GM12878 (cell line): ENCODE measurements at regions of chr20 and their contacts with region 1.

Region 1: GRCh38 chr20:45934586-45935415 is at the start of gene PCIF1:
- DNase-seq: peak; percentile 93
- ATAC-seq: peak; percentile 87
- H3K4me3 ChIP-seq: peak within 1 kb of the TSS; percentile 81
- H3K27ac ChIP-seq: peak within 1 kb of the TSS; percentile 97
- H3K4me1 ChIP-seq: peaks cover 5% of the 10 kb centered on the region; the same call in 1 of the 2 replicates
- H3K27me3 ChIP-seq: no peaks in the 10 kb centered on the region
- CTCF ChIP-seq: no peak
- EP300 ChIP-seq: no peak
- POLR2A ChIP-seq: peak; percentile 98
- RAD21 ChIP-seq: no peak
- polyA plus RNA-seq, gene PCIF1: 8.4 to 10.1 TPM

Region 2: DNA sequence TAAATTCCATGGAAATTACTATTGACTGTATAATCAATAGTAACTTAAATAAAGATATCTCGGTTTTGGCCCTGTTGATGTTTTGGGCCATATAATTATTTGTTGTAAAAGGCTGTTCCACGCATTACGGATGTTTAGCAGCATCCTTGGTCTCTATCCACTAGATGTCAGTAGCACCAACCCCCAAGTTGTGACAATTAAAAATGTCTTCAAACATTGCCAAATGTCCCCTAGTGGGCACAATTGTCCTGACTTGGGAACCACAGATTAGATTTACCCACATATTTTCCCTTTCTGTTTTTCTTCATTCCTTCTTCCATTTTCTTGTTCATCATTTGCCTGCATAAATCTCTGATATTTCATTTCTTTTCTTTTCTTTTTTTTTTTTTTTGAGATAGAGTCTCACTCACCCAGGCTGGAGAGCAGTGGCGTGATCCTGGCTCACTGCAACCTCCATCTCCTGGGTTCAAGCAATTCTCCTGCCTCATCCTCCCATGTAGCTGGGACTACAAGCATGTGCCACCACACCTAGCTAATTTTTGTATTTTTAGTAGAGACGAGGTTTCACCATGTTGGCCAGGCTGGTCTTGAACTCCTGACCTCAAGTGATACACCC is 342.1 kb before region 1 on chr20:
- CTCF ChIA-PET with region 1: no interaction called
- POLR2A ChIA-PET with region 1: no interaction called
- RAD21 ChIA-PET with region 1: no interaction called
- SMC1A ChIA-PET with region 1: no interaction called
- in situ Hi-C with region 1: no loop called
- intact Hi-C with region 1: no loop called
- DNase-seq: no peak
- ATAC-seq: peak; percentile 92
- H3K4me3 ChIP-seq: no peak overlapping the region
- H3K27ac ChIP-seq: no peak overlapping the region
- H3K4me1 ChIP-seq: no peaks in the 10 kb centered on the region
- H3K27me3 ChIP-seq: no peaks in the 10 kb centered on the region; a peak in 2 of 4 replicates
- CTCF ChIP-seq: peak; percentile 71 to 94 (median 82)
- EP300 ChIP-seq: no peak
- POLR2A ChIP-seq: no peak
- RAD21 ChIP-seq: peak; percentile 71

Region 3: GRCh38 chr20:45857114-45857881 is 77.5 kb before region 1 on chr20 and contains the starts of genes ACOT8 and ZSWIM3:
- CTCF ChIA-PET with region 1: interaction called, 3 read pairs
- POLR2A ChIA-PET with region 1: interaction called, 16 read pairs
- RAD21 ChIA-PET with region 1: no interaction called
- SMC1A ChIA-PET with region 1: interaction called, 4 read pairs
- in situ Hi-C with region 1: no loop called
- intact Hi-C with region 1: loop called (anchors 2 kb)
- DNase-seq: peak; percentile 100
- ATAC-seq: peak; percentile 98
- H3K4me3 ChIP-seq: peak within 1 kb of the TSS; percentile 97
- H3K27ac ChIP-seq: peak within 1 kb of the TSS; percentile 96
- H3K4me1 ChIP-seq: peaks cover 8% of the 10 kb centered on the region
- H3K27me3 ChIP-seq: no peaks in the 10 kb centered on the region
- CTCF ChIP-seq: no peak
- EP300 ChIP-seq: no peak; a peak in 1 of 4 replicates
- POLR2A ChIP-seq: peak; percentile 91
- RAD21 ChIP-seq: no peak
- polyA plus RNA-seq, gene ACOT8: 5.1 to 10.1 TPM
- polyA plus RNA-seq, gene ZSWIM3: 1.6 to 2.0 TPM

Region 4: DNA sequence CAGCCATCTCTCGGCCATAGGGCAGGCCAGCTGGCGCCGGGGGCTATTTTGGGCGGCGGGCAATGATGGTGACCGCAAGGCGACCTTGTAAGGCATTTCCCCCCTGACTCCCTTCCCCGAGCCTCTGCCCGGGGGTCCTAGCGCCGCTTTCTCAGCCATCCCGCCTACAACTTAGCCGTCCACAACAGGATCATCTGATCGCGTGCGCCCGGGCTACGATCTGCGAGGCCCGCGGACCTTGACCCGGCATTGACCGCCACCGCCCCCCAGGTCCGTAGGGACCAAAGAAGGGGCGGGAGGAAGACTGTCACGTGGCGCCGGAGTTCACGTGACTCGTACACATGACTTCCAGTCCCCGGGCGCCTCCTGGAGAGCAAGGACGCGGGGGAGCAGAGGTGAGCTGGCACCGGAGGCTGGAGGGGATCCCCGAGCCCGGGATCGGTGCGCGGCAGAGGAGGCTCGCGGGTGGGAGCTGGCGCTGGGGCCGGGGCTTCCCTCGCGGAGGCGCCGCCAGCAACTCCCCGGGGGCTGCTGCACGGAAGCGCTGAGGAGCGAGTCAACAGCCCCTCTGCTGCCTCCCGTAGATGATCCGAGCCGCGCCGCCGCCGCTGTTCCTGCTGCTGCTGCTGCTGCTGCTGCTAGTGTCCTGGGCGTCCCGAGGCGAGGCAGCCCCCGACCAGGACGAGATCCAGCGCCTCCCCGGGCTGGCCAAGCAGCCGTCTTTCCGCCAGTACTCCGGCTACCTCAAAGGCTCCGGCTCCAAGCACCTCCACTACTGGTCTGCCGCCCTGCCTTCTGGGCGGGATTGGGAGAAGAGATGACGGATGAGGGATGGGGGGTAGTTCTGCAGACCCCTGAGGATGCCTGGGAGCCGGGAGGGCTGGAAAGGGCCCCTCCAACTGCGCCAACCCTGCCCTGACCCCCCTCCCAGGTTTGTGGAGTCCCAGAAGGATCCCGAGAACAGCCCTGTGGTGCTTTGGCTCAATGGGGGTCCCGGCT is 43.5 kb before region 1 on chr20 and contains the starts of genes CTSA and NEURL2:
- CTCF ChIA-PET with region 1: interaction called, 7 read pairs
- POLR2A ChIA-PET with region 1: interaction called, 19 read pairs
- RAD21 ChIA-PET with region 1: interaction called, 11 read pairs
- SMC1A ChIA-PET with region 1: interaction called, 7 read pairs
- in situ Hi-C with region 1: no loop called
- intact Hi-C with region 1: loop called (anchors 1 kb)
- DNase-seq: peak; percentile 51
- ATAC-seq: peak; percentile 87
- H3K4me3 ChIP-seq: peak within 1 kb of the TSS; percentile 83
- H3K27ac ChIP-seq: peak within 1 kb of the TSS; percentile 75
- H3K4me1 ChIP-seq: peaks cover 22% of the 10 kb centered on the region
- H3K27me3 ChIP-seq: no peaks in the 10 kb centered on the region
- CTCF ChIP-seq: peak in 1 of 3 experiments; percentile 26; a peak in 1 of 6 replicates
- EP300 ChIP-seq: peak; percentile 43 to 62; a peak in 2 of 4 replicates
- POLR2A ChIP-seq: peak; percentile 88
- RAD21 ChIP-seq: 0 out of 2 replicates have a peak, but pooled peaks have one; percentile 9
- polyA plus RNA-seq, gene CTSA: 7.1 to 8.6 TPM
- polyA plus RNA-seq, gene NEURL2: 0.97 to 1.8 TPM

Region 5: DNA sequence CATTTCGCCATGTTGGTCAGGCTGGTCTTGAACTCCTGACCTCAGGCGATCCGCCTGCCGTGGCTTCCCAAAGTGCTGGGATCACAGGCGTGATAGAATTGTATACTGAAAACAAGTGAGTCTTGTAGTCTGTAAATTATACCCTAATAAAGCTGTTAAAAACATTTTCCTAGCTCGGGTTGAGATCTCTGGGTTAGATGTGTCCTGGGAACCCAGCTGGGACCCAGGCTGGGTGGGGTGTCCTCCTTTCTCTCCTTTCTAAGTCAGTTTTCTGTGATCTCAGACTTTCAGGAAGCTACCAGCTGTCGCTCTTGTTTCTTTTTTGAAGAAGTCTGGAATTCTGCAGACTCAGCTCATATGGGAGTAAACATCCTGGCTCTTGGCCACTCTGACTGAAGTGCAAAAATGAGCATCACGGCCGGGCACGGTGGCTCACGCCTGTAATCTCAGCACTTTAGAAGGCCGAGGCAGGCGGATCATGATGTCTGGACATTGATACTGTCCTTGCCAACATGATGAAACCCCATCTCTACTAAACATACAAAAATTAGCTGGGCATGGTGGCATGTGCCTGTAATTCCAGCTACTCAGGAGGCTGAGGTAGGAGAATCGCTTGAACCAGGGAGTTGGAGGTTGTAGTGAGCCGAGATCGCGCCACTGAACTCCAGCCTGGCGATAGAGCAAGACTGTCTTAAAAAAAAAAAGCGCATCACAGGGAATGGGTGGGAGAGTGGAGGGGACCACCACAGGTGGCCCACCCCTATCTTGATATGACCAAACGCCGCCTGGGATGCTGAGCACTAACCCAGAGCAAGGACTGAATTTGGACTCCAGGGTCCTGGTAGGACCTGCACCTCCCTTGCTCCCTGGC is 10.2 kb before region 1 on chr20:
- CTCF ChIA-PET with region 1: interaction called, 10 read pairs
- POLR2A ChIA-PET with region 1: interaction called, 7 read pairs
- RAD21 ChIA-PET with region 1: interaction called, 3 read pairs
- SMC1A ChIA-PET with region 1: interaction called, 5 read pairs
- in situ Hi-C with region 1: no loop called
- intact Hi-C with region 1: no loop called
- DNase-seq: no peak
- ATAC-seq: no peak
- H3K4me3 ChIP-seq: no peak overlapping the region
- H3K27ac ChIP-seq: no peak overlapping the region
- H3K4me1 ChIP-seq: no peaks in the 10 kb centered on the region
- H3K27me3 ChIP-seq: no peaks in the 10 kb centered on the region
- CTCF ChIP-seq: no peak
- EP300 ChIP-seq: no peak
- POLR2A ChIP-seq: no peak
- RAD21 ChIP-seq: no peak

Region 6: DNA sequence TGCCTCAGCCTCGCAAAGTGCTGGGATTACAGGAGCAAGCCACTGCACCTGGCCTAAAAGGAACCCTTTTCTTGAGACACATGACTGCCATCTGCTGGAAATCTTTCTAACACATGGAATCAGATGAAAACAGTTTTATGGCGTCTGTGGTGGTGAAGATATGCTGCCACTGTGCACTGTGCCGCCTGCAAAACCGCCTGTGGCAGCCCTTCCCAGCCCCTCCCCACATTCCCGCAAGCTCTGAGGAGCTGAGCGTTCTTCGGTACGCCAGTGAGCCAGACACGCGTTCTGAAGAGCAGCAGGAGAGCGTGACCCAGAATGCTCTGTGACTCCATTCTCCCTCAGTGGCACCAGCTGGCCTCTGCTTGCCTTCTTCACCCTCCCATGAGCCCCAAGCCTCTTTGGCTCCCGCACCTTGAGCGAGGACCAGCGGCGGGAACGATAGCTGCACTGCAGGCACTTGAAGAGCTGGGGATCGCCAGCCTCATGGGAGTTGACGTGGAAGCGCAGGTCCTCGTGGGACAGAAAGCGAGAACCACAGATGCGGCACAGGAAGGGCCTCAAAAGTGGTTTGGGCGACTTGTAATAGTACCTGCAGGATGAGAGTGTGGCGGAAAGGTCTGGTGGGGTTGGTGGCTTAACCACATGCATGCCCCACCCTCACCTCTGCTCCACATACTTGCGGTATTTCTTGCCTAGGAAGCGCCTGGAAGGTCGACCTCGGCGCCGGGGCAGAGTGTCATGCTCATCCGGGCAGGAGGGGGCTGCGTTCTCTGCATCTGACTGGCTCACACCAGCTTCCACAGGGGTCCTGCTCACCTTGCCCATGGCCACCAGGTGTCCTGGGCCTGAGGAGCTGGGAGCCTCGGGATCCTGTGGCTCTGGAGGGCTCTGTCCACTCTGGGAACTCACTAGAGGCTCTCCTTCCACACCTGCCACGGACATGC is 28.5 kb after region 1 on chr20:
- CTCF ChIA-PET with region 1: interaction called, 79 read pairs
- POLR2A ChIA-PET with region 1: interaction called, 17 read pairs
- RAD21 ChIA-PET with region 1: interaction called, 66 read pairs
- SMC1A ChIA-PET with region 1: interaction called, 33 read pairs
- in situ Hi-C with region 1: no loop called
- intact Hi-C with region 1: no loop called
- DNase-seq: no peak
- ATAC-seq: peak; percentile 43; the same call in 2 of the 3 replicates
- H3K4me3 ChIP-seq: no peak overlapping the region
- H3K27ac ChIP-seq: no peak overlapping the region
- H3K4me1 ChIP-seq: peaks cover 18% of the 10 kb centered on the region
- H3K27me3 ChIP-seq: no peaks in the 10 kb centered on the region
- CTCF ChIP-seq: peak in 2 of 3 experiments; percentile 31 to 51; a peak in 3 of 6 replicates
- EP300 ChIP-seq: no peak
- POLR2A ChIP-seq: no peak; the same call in 1 of the 2 replicates
- RAD21 ChIP-seq: peak; percentile 53